ENCODE measurements at regions of chr13 and their contacts with region 1.

Region 1: DNA sequence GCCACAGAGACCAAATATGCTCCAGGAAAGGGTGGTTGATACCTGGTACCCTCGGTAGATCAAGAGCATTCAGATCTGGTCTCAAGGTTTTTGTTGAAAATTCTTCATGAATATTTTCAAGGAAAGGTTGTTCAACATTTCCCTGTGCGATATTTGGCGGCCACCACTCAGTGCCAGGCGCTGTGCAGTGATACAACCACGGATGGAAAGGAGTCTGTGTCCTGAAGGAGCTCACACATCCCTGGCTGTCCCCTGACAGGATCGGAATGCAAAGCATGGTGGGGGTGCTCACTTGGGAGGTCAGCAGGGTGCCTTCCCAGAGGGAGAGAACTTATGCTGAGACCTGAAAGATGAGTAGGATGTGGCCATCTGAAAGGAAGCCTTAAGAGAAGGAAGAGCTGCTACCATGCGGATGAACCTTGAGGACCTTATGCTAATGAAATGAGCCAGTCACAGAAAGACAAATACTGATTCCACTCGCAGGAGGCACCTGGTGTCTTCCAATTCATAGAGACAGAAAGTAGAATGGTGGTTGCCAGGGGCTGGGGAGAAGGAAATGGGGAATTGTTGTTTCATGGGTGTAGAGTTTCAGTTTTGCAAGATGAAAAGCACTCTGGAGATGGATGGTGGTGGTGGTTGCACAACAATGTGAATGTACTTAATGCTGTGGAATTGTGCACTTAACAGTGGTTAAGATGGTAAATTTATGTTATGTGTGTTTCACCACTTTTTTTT is 41.6 kb downstream of the HSPH1 start:
- DNase-seq: no peak
- H3K4me3 ChIP-seq: no peak overlapping the region
- H3K27ac ChIP-seq: no peak overlapping the region
- H3K27me3 ChIP-seq: peaks cover 0 to 9% (median 0%) of the 10 kb centered on the region in 45 donors
- CTCF ChIP-seq: no peak

Region 2: GRCh38 chr13:31067416-31068118 is 52.6 kb before region 1 on chr13:
- intact Hi-C with region 1: loop called in 1 of 2 experiments (anchors 1 kb)
- DNase-seq: no peak
- H3K4me3 ChIP-seq: no peak overlapping the region
- H3K27ac ChIP-seq: no peak overlapping the region
- H3K27me3 ChIP-seq: no peaks in the 10 kb centered on the region
- CTCF ChIP-seq: no peak

Region 3: GRCh38 chr13:31174018-31174417 is 53.9 kb after region 1 on chr13:
- intact Hi-C with region 1: no loop called
- DNase-seq: no peak
- H3K4me3 ChIP-seq: no peak overlapping the region
- H3K27ac ChIP-seq: no peak overlapping the region
- H3K27me3 ChIP-seq: no peaks in the 10 kb centered on the region
- CTCF ChIP-seq: peak in 49 of 56 donors; percentile 13 to 76 (median 48)

Measured in dorsolateral prefrontal cortex (tissue), 120 donors.